Transverse colon (tissue), 4 donors: ENCODE measurements at regions of chr17 and their contacts with region 1.

Region 1: GRCh38 chr17:78532922-78533640 is 44.1 kb downstream of the DNAH17 start:
- DNase-seq: no peak
- H3K4me3 ChIP-seq: no peak overlapping the region
- H3K27ac ChIP-seq: no peak overlapping the region
- H3K4me1 ChIP-seq: peaks cover 0 to 16% (median 7%) of the 10 kb centered on the region in 4 donors
- H3K27me3 ChIP-seq: peaks cover 4% of the 10 kb centered on the region
- CTCF ChIP-seq: no peak
- EP300 ChIP-seq: no peak
- POLR2A ChIP-seq: no peak

Region 2: DNA sequence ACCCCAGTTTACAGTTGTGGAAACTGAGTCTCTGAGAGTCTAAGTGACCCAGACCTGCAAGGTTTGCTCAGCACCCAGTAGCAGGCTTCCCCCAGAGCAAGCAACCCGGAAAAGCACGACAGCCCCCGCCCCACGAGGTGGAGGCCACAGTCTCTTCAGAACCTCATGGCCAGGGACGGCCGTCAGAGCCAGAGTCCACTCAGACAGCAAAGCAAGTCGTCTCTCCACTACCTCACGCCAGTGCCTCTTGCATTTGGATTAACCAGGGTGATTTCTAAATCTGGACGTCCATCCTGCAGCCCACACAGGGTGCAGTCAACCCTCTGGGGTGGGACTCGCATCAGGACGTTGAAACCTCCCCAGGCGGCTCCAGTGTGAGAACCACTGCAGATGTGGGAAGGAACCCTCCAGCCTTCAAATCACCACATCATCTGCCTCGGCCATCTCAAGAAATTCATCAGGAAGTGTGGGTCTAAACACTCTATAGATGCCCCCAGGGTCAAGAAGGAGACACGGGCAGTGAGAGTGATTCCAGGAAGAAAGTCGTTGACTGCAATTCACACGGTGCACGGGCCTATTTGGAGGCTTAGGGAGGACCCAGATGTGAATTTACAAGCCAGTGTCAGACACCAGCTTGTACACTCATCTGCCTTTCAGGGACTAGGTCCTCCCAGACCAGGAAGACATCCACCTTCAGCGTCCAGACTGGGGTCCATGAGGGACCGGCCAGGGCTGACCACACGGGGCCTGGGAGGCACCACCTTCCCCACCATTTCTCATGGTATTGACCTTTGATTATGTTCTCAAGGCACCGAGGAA is 1097.9 kb after region 1 on chr17:
- in situ Hi-C with region 1: no loop called
- intact Hi-C with region 1: loop called (anchors 5 kb)
- DNase-seq: no peak
- H3K4me3 ChIP-seq: no peak overlapping the region
- H3K27ac ChIP-seq: no peak overlapping the region
- H3K4me1 ChIP-seq: no peaks in the 10 kb centered on the region
- H3K27me3 ChIP-seq: peaks cover 1% of the 10 kb centered on the region
- CTCF ChIP-seq: no peak
- EP300 ChIP-seq: no peak
- POLR2A ChIP-seq: no peak